SK-N-SH (cell line): ENCODE measurements at regions of chr11 and their contacts with region 1.

Region 1: GRCh38 chr11:65040847-65041621 is at the start of gene SAC3D1:
- DNase-seq: peak; percentile 96
- H3K4me3 ChIP-seq: peak within 1 kb of the TSS; percentile 76 to 81
- H3K27ac ChIP-seq: peak within 1 kb of the TSS; percentile 80 to 91
- H3K4me1 ChIP-seq: peaks cover 5 to 7% of the 10 kb centered on the region in 2 experiments; a peak in 2 of 4 replicates
- H3K27me3 ChIP-seq: no peaks in the 10 kb centered on the region
- CTCF ChIP-seq: no peak
- EP300 ChIP-seq: no peak
- RAD21 ChIP-seq: no peak
- polyA plus RNA-seq, gene SAC3D1: 13.1 and 22.5 TPM in 2 replicates

Region 2: GRCh38 chr11:65027213-65028067 is 13.6 kb before region 1 on chr11 and contains the start of gene SNX15:
- CTCF ChIA-PET with region 1: interaction called, 15 read pairs
- POLR2A ChIA-PET with region 1: interaction called, 5 read pairs
- DNase-seq: peak; percentile 93
- H3K4me3 ChIP-seq: peak within 1 kb of the TSS; percentile 60 to 71
- H3K27ac ChIP-seq: peak within 1 kb of the TSS; percentile 67 to 91
- H3K4me1 ChIP-seq: peaks cover 0 to 5% of the 10 kb centered on the region in 2 experiments; a peak in 2 of 4 replicates
- H3K27me3 ChIP-seq: no peaks in the 10 kb centered on the region
- CTCF ChIP-seq: peak; percentile 60
- EP300 ChIP-seq: peak in 1 of 2 experiments; percentile 9; a peak in 1 of 4 replicates
- RAD21 ChIP-seq: peak; percentile 20; the same call in 1 of the 2 replicates
- polyA plus RNA-seq, gene SNX15: 9.0 and 17.2 TPM in 2 replicates